GM13977 (cell line): ENCODE measurements at regions of chr16 and their contacts with region 1.

Region 1: DNA sequence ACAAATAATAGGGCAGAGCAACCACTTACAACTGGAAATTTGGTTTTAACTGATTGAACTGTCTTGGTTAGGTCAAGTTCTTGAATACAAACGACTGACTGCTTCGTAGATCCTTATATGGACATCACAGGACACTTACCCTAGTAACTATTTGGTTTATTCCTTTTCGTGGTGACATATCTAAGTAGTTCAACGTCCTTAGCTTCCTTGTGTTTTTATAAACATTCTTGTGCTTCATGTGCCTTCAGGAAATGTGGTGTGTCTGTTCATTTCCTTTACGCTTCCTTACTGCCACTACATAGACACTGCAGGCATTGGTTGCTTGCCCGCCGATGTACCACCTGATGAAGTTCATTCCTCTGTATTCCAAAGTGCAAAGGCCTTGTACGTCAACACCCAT is 59.3 kb downstream of the USP10 start:
- DNase-seq: no peak
- CTCF ChIP-seq: no peak

Region 2: GRCh38 chr16:84970447-84971127 is 211.5 kb after region 1 on chr16:
- in situ Hi-C with region 1: loop called (anchors 5 kb)
- DNase-seq: peak; percentile 86
- CTCF ChIP-seq: peak; percentile 90